Body of pancreas (tissue), 4 donors: ENCODE measurements at regions of chr2 and their contacts with region 1.

Region 1: GRCh38 chr2:96514521-96514920 is 9.4 kb upstream of the NEURL3 start:
- DNase-seq: no peak
- ATAC-seq: no peak
- H3K4me3 ChIP-seq: no peak overlapping the region
- H3K27ac ChIP-seq: no peak overlapping the region
- H3K4me1 ChIP-seq: peaks cover 3% of the 10 kb centered on the region
- H3K27me3 ChIP-seq: no peaks in the 10 kb centered on the region
- CTCF ChIP-seq: no peak
- POLR2A ChIP-seq: no peak

Region 2: DNA sequence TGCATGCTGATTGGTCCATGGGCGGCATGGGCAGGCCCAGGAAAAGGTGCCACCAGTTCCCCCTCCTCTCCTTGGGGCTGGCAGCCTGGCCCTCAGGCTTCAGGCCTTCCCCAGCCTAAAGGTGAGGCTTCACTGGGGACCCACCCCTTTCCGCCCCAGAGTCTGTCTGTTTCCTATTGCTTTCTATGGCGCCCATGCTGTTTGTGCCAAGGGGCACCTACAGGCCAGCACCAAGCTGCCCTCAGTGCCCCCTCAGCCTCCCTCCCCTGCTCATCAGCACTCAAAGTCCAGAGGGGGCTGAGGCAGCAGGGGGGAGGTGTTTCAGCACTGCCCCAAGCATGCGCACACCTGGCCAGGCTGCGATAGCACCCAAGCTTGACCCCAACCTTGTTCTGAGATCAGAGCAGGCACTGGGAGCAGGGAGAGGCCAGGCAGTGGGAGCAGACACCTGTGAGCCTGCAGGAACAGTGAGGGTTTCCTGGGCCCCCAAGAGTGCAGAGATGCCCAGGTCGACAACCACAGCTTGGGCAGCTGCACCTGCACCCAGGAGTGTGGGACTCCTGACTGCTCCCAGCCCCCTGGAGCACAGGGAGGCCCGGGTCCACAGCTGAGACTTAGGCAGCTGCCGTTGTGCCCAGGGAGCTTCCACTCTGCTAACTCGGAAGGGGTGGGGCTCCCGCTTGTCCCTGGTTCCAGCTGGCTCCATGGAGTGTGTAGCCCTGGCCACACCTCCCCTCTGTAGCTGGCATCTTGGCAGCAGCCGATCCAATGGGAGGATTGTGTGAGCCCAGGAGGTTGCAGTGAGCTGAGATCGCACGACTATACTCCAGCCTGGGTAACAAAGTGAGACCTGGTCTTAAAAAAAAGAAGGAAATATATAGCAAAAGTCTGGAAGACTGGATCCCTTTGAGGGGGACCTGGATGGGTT is 109.8 kb before region 1 on chr2:
- intact Hi-C with region 1: loop called (anchors 5 kb)
- DNase-seq: peak; percentile 44 to 72 (median 67)
- ATAC-seq: peak; percentile 35
- H3K4me3 ChIP-seq: no peak overlapping the region
- H3K27ac ChIP-seq: peak overlapping the region in 1 of 4 donors; percentile 11
- H3K4me1 ChIP-seq: peaks cover 31% of the 10 kb centered on the region
- H3K27me3 ChIP-seq: no peaks in the 10 kb centered on the region
- CTCF ChIP-seq: no peak
- POLR2A ChIP-seq: no peak